PC-9 (cell line): ENCODE measurements at regions of chr14 and their contacts with region 1.

Region 1: DNA sequence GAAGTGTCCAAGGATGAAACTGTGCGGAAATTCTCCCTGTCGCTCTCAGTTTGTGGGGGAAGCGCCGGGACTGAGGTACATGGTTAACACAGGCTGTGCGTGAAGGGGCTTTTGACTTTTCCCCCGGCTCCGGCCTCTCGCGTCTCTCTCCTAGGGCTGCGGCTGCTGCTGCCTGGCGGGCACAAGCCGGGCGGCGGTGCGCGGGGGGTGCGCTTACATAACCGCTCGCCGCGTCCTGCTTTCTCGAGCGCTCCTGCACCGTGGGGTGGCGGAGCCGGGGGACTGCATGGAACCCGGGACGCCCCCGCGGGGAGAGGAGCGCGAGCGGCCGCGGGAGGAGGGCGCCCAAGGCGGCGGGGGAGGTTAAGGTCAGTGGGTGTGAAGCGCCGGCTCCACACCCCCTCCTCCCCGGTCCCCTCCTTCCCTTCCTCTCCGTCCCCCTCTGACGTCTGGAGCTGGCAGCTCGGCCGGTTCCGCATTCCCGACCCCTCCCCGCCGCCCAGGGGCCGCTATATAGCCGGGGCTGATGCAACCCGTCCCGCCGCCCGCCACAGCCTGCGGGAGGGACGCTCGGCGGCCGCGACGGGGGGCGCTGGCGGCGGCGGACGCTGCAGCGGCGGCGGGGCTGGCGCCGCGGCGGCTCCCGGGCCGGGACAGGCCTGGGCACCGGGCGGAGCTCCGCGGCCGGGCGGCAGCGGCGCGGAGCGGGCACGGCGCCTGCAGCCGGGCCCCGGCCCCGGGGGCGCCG is at the start of gene JDP2:
- DNase-seq: peak; percentile 78 to 99
- H3K4me3 ChIP-seq: peak within 1 kb of the TSS; percentile 90
- H3K27ac ChIP-seq: no peak within 1 kb of the TSS
- H3K4me1 ChIP-seq: peaks cover 52% of the 10 kb centered on the region
- H3K27me3 ChIP-seq: no peaks in the 10 kb centered on the region
- CTCF ChIP-seq: no peak
- total RNA-seq, gene JDP2: 186 and 300 TPM in 2 replicates

Region 2: GRCh38 chr14:75182841-75183624 is 244.6 kb before region 1 on chr14:
- CTCF ChIA-PET with region 1: no interaction called
- POLR2A ChIA-PET with region 1: interaction called, 16 read pairs
- intact Hi-C with region 1: no loop called
- DNase-seq: peak; percentile 53 to 94
- H3K4me3 ChIP-seq: no peak overlapping the region
- H3K27ac ChIP-seq: peak overlapping the region; percentile 63
- H3K4me1 ChIP-seq: peaks cover 39% of the 10 kb centered on the region
- H3K27me3 ChIP-seq: no peaks in the 10 kb centered on the region
- CTCF ChIP-seq: no peak; the same call in 1 of the 2 replicates

Region 3: DNA sequence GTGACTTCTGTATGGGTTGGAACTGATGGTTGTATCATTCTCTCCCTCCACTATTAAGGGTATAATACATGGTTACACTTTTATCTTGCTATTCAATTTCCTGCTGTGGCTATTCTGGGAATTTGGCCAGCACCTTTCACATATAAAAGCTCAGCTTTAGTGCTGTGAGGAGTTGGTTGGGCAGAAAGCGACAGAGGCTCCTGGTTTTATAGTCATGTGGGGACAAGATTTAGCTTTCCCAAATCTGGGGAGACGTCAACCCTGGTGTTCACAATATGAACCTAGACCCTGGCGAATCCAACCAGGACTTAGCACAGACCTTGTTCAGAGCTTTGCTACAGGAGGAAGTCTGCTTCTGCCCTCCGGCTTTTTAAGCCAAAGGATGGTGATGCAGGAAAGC is 112.5 kb before region 1 on chr14:
- CTCF ChIA-PET with region 1: no interaction called
- POLR2A ChIA-PET with region 1: no interaction called
- intact Hi-C with region 1: loop called (anchors 1 kb)
- DNase-seq: peak; percentile 53 to 70
- H3K4me3 ChIP-seq: no peak overlapping the region; the same call in 1 of the 2 replicates
- H3K27ac ChIP-seq: peak overlapping the region; percentile 3; the same call in 1 of the 2 replicates
- H3K4me1 ChIP-seq: peaks cover 31% of the 10 kb centered on the region
- H3K27me3 ChIP-seq: no peaks in the 10 kb centered on the region
- CTCF ChIP-seq: no peak

Region 4: GRCh38 chr14:75440733-75441477 is 13.2 kb after region 1 on chr14:
- CTCF ChIA-PET with region 1: interaction called, 5 read pairs
- POLR2A ChIA-PET with region 1: interaction called, 4 read pairs
- intact Hi-C with region 1: loop called (anchors 2 kb)
- DNase-seq: no peak
- H3K4me3 ChIP-seq: no peak overlapping the region
- H3K27ac ChIP-seq: no peak overlapping the region
- H3K4me1 ChIP-seq: peaks cover 25% of the 10 kb centered on the region
- H3K27me3 ChIP-seq: no peaks in the 10 kb centered on the region
- CTCF ChIP-seq: no peak

Region 5: GRCh38 chr14:75487155-75487671 is 59.6 kb after region 1 on chr14:
- CTCF ChIA-PET with region 1: interaction called, 3 read pairs
- POLR2A ChIA-PET with region 1: interaction called, 7 read pairs
- intact Hi-C with region 1: loop called (anchors 1 kb)
- DNase-seq: peak; percentile 83 to 99
- H3K4me3 ChIP-seq: no peak overlapping the region
- H3K27ac ChIP-seq: 0 out of 2 replicates have a peak overlapping the region, but pooled peaks have one; percentile 5
- H3K4me1 ChIP-seq: peaks cover 18% of the 10 kb centered on the region
- H3K27me3 ChIP-seq: no peaks in the 10 kb centered on the region
- CTCF ChIP-seq: no peak

Region 6: GRCh38 chr14:76812211-76813044 is 1384.8 kb after region 1 on chr14 and contains the start of gene ANGEL1:
- CTCF ChIA-PET with region 1: interaction called, 18 read pairs
- POLR2A ChIA-PET with region 1: no interaction called
- intact Hi-C with region 1: no loop called
- DNase-seq: peak; percentile 85 to 100
- H3K4me3 ChIP-seq: peak within 1 kb of the TSS; percentile 74
- H3K27ac ChIP-seq: no peak within 1 kb of the TSS
- H3K4me1 ChIP-seq: peaks cover 14% of the 10 kb centered on the region
- H3K27me3 ChIP-seq: peaks cover 17% of the 10 kb centered on the region
- CTCF ChIP-seq: no peak
- total RNA-seq, gene ANGEL1: 31.7 and 44.0 TPM in 2 replicates